Breast epithelium (tissue), 4 donors: ENCODE measurements at regions of chr6 and their contacts with region 1.

Region 1: GRCh38 chr6:113779656-113780055 is 77.5 kb upstream of the MARCKS start:
- DNase-seq: no peak
- H3K4me3 ChIP-seq: no peak overlapping the region
- H3K27ac ChIP-seq: no peak overlapping the region
- H3K4me1 ChIP-seq: no peaks in the 10 kb centered on the region
- H3K27me3 ChIP-seq: no peaks in the 10 kb centered on the region
- CTCF ChIP-seq: no peak
- POLR2A ChIP-seq: no peak

Region 2: GRCh38 chr6:113540466-113540865 is 239.2 kb before region 1 on chr6:
- intact Hi-C with region 1: no loop called
- DNase-seq: no peak
- H3K4me3 ChIP-seq: no peak overlapping the region
- H3K27ac ChIP-seq: no peak overlapping the region
- H3K4me1 ChIP-seq: no peaks in the 10 kb centered on the region
- H3K27me3 ChIP-seq: no peaks in the 10 kb centered on the region
- CTCF ChIP-seq: no peak
- POLR2A ChIP-seq: no peak

Region 3: GRCh38 chr6:113736978-113737377 is 42.7 kb before region 1 on chr6:
- intact Hi-C with region 1: loop called (anchors 2 kb)
- DNase-seq: no peak
- H3K4me3 ChIP-seq: no peak overlapping the region
- H3K27ac ChIP-seq: no peak overlapping the region
- H3K4me1 ChIP-seq: no peaks in the 10 kb centered on the region
- H3K27me3 ChIP-seq: no peaks in the 10 kb centered on the region
- CTCF ChIP-seq: no peak
- POLR2A ChIP-seq: no peak

Region 4: DNA sequence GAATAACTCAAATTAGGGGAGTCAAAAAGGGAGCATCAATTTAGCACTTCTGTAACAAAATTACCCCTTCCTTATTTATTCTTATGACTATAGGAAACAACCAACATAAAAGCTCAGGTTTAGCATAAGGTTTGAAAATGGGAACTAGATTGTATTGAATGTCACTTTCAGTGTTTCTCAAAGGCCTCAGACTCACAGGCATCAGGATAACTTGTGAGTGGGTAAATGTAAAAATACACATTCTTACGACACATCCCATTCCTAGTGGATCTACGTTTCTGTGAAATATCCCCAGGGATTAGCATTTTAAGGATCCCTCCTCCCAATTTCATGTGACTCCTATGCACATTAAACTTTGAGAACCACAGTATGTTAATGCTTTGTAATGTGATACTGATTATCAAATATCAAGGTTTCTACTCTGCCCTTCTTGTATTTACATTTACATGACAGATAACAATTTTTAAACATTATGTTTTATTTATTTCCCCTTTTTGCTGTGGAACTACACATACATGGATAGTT is 448.4 kb after region 1 on chr6:
- intact Hi-C with region 1: no loop called
- DNase-seq: no peak
- H3K4me3 ChIP-seq: no peak overlapping the region
- H3K27ac ChIP-seq: no peak overlapping the region
- H3K4me1 ChIP-seq: no peaks in the 10 kb centered on the region
- H3K27me3 ChIP-seq: no peaks in the 10 kb centered on the region
- CTCF ChIP-seq: no peak
- POLR2A ChIP-seq: no peak